Left ventricle myocardium superior (tissue), 1 donor: ENCODE measurements at regions of chr4 and their contacts with region 1.

Region 1: GRCh38 chr4:83267121-83267829 is 17.3 kb downstream of the COQ2 start:
- DNase-seq: no peak
- ATAC-seq: no peak

Region 2: GRCh38 chr4:82462415-82462831 is 804.9 kb before region 1 on chr4:
- intact Hi-C with region 1: loop called (anchors 10 kb)
- DNase-seq: peak; percentile 85
- ATAC-seq: peak; percentile 91

Region 3: DNA sequence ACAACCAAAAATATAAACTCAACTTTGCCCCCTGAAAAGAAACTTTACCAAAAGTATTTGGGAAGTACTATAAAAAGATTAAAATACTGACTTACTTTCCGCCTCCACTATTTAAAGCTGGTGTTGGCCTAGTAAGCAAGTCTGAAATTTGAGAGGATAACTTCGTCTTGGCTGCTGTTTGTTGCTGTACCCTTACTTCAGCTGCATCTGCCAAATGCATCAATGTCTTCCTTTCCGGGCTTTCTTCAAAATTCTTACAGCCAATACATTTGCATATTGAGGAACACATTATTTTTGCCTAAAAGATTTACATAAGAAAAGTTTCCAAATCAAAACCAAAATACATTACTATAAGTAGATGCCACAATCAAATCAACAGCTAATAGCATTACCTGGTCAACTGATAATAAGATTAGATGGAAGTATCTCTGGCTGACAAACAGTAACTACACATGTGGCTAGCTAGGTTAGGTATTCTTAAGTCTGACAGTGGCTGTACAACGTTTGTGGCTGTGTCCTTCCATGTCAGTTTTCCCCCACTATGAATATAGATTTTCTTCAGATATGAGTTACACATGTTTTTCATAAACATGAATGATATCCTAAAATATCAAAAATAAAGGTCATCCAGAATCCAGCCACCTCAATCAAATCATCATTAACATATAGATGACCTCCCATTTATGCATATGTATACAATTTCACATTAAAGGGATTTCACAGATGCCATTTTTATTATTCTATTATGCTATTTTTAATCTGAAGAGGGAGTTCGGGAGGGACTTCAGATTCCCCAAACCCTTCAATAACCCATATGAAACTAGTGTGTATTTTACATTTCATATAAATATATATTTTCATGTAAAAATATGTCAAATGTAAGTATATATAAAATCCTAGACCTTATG is 336.2 kb before region 1 on chr4:
- intact Hi-C with region 1: no loop called
- DNase-seq: no peak
- ATAC-seq: no peak

Region 4: DNA sequence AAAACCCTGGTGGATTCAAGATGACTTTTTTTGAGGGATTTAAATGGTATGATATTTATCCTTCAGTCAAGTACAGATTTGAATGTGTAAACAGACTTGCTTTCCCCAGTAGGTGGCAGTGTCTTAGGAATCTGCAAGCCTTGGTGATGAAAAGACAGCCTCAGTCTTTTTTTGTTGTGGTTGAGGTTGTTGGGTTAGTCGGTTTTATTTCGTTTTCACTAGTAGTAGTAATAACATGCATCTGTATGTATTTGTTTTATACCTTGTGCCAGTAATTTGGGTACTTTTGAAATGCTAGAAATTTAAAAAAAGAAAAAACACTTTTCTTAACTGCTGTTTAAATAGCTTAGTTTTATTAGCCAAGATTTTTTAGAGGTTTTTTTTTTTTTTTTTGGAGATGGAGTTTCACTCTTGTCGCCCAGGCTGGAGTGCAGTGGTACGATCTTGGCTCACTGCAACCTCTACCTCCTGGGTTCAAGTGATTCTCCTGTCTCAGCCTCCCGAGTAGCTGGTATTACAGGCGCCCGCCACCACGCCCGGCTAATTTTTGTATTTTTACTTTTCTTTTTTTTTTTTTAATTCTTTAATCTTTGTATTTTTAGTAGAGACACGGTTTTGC is 193.1 kb before region 1 on chr4:
- intact Hi-C with region 1: loop called (anchors 10 kb)
- DNase-seq: no peak
- ATAC-seq: peak; percentile 30